ENCODE measurements at regions of chr2 and their contacts with region 1.

Region 1: GRCh38 chr2:15568874-15569273 is 7.7 kb upstream of the NBAS start:
- DNase-seq: no peak
- H3K4me3 ChIP-seq: no peak overlapping the region
- H3K27ac ChIP-seq: no peak overlapping the region
- H3K4me1 ChIP-seq: no peaks in the 10 kb centered on the region
- H3K27me3 ChIP-seq: no peaks in the 10 kb centered on the region
- CTCF ChIP-seq: no peak

Region 2: GRCh38 chr2:14303366-14304115 is 1265.3 kb before region 1 on chr2:
- CTCF ChIA-PET with region 1: no interaction called
- POLR2A ChIA-PET with region 1: no interaction called
- intact Hi-C with region 1: loop called (anchors 5 kb)
- DNase-seq: no peak
- H3K4me3 ChIP-seq: no peak overlapping the region
- H3K27ac ChIP-seq: no peak overlapping the region
- H3K4me1 ChIP-seq: no peaks in the 10 kb centered on the region
- H3K27me3 ChIP-seq: peaks cover 12% of the 10 kb centered on the region
- CTCF ChIP-seq: no peak

Measured in A673 (cell line).